Right ventricle myocardium superior (tissue), 1 donor: ENCODE measurements at regions of chr11 and their contacts with region 1.

Region 1: GRCh38 chr11:92707173-92707619 is 262.3 kb upstream of the MTNR1B start:
- DNase-seq: no peak
- ATAC-seq: peak; percentile 42

Region 2: DNA sequence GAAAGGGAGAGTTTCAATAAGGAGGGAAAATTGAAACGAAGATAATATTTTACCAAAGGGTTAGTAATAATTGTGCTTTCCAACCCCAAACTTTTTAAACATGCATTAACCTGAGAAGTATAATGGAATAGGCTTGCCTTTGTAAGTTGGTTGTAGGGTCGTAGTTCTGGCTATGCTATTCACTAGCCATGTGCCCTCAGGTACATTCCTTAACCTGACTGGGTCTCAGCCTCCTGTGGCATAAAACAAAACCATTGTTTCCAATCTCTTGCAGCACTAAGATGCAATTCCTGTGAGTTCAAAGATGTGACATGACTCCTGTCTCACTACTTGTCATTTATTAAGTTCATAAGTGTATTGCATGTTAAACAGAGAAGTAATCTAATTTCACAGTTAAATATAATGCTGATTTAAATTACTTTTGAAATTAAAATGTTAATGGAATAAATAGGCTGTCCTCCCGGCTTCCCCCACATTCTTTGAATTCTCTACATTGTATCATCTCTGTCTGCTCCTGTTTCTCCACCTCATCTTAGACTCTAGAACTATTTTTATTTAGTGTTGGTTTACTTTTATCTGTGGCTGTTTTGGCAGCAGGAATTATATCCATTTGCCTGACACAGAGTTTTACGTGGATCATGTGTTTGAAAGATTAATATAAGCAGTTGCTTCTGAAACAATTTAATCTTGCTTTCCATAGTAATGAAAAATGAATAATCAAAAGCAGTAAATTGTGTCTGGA is 266.3 kb before region 1 on chr11:
- intact Hi-C with region 1: no loop called
- DNase-seq: no peak
- ATAC-seq: no peak

Region 3: DNA sequence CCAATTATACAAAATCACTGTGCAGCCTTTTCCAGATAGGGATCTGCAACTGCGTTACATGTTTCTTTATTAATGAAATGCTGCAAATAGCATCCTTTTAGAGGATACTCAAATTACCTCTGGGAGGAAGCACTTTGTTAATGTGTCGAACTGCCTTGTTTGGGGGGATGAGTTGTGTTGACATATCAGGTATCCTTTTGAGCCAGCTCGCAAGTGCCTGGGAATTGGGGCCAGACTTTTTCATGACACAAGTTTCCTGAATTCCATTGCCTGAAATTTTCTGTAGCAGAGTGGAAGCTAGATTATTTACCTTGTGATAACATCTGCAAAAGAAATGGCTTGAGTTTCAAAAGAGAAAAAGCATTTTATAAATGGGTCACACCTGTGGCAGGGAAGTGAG is 36.8 kb before region 1 on chr11:
- intact Hi-C with region 1: loop called (anchors 5 kb)
- DNase-seq: no peak
- ATAC-seq: no peak